ENCODE measurements at regions of chr16 and their contacts with region 1.

Region 1: GRCh38 chr16:58814348-58814801 is 80.3 kb upstream of the GOT2 start:
- DNase-seq: no peak
- H3K4me3 ChIP-seq: peak overlapping the region; percentile 14 to 53 (median 30)
- H3K27ac ChIP-seq: no peak overlapping the region
- H3K4me1 ChIP-seq: no peaks in the 10 kb centered on the region
- H3K27me3 ChIP-seq: no peaks in the 10 kb centered on the region
- CTCF ChIP-seq: peak; percentile 67 to 80 (median 69)
- POLR2A ChIP-seq: no peak

Region 2: GRCh38 chr16:58789351-58789750 is 25.0 kb before region 1 on chr16:
- intact Hi-C with region 1: no loop called
- DNase-seq: no peak
- H3K4me3 ChIP-seq: no peak overlapping the region
- H3K27ac ChIP-seq: no peak overlapping the region
- H3K4me1 ChIP-seq: no peaks in the 10 kb centered on the region
- H3K27me3 ChIP-seq: no peaks in the 10 kb centered on the region
- CTCF ChIP-seq: no peak
- POLR2A ChIP-seq: no peak

Region 3: GRCh38 chr16:58828901-58829545 is 14.6 kb after region 1 on chr16:
- intact Hi-C with region 1: loop called (anchors 1 kb)
- DNase-seq: no peak
- H3K4me3 ChIP-seq: peak overlapping the region in 1 of 3 donors; percentile 51
- H3K27ac ChIP-seq: no peak overlapping the region
- H3K4me1 ChIP-seq: peaks cover 0 to 3% of the 10 kb centered on the region in 2 donors
- H3K27me3 ChIP-seq: no peaks in the 10 kb centered on the region
- CTCF ChIP-seq: no peak
- POLR2A ChIP-seq: no peak

Measured in breast epithelium (tissue), 4 donors.